Heart left ventricle (tissue), 16 donors: ENCODE measurements at regions of chr2 and their contacts with region 1.

Region 1: DNA sequence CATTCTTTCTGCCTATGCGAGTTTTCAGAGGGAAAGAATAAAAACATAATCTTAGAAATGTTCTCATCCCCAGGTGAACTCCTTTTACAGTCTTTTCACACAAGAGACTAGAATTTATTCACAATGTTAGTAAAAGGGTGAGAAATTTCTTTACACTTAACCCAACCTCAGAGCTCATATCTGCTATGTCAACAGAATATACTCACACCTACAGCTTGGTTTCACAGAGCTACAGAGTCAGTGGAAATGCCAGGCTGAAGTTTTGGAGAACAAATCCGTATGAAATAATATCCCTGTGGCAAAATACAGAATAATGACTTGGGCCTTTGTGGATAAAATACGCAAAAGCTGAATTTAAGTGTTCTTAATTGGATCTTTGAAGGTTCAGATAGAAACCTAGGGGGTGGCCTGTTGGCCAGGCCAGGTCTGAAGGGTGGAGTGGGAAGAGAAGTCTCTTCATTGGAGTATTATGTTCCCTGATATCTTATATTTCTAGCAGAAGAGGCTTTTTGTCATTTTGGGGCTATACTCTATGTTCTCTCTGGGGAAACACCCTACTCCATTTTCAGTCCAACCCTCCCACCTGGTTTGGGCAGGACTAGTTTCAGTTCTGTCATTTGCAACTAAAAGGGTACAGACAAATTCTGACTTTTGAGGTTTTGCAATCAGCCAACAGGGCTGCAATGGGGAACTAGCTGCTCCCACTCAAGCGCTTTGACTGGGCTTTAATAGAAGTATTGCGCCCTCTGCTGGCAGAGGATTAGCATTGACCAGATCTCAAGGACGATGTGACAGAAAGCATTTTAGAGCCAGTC is 25.7 kb downstream of the FBXO48 start:
- DNase-seq: peak in 4 of 5 donors; percentile 81 to 86 (median 82)
- ATAC-seq: peak; percentile 82 to 93 (median 91)
- H3K4me3 ChIP-seq: no peak overlapping the region
- H3K27ac ChIP-seq: peak overlapping the region in 8 of 12 donors; percentile 10 to 69 (median 40)
- H3K4me1 ChIP-seq: peaks cover 0 to 20% (median 13%) of the 10 kb centered on the region in 12 donors
- H3K27me3 ChIP-seq: no peaks in the 10 kb centered on the region
- CTCF ChIP-seq: peak; percentile 85 to 94 (median 89)
- POLR2A ChIP-seq: no peak

Region 2: GRCh38 chr2:68282811-68283418 is 158.5 kb before region 1 on chr2:
- intact Hi-C with region 1: loop called in 2 of 10 experiments (anchors 10 kb)
- DNase-seq: no peak
- ATAC-seq: no peak
- H3K4me3 ChIP-seq: no peak overlapping the region
- H3K27ac ChIP-seq: no peak overlapping the region
- H3K4me1 ChIP-seq: peaks cover 0 to 34% (median 7%) of the 10 kb centered on the region in 12 donors
- H3K27me3 ChIP-seq: no peaks in the 10 kb centered on the region
- CTCF ChIP-seq: peak; percentile 58 to 80 (median 74)
- POLR2A ChIP-seq: no peak

Region 3: DNA sequence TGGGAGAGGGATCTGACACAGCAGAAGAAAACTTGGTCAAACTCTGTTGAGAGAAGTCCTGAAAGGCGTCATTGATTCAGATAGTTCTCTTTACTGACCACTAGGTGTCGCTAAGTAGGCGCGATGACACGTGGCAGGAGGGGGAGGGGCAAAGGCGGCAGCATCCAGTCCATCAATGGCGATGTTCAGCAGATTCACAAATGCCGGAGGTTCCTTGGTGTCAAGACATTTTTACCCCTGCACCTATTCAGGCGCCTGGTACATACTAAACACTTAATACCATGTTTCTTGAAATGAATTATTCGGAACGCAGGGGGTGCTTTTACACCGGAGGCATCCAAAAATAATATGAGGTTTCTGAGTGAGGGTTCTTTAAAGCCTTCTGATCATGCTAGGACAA is 79.3 kb before region 1 on chr2:
- intact Hi-C with region 1: loop called (anchors 1 to 5 kb)
- DNase-seq: peak; percentile 67 to 89 (median 79)
- ATAC-seq: peak in 3 of 4 donors; percentile 73 to 82 (median 75)
- H3K4me3 ChIP-seq: peak overlapping the region in 3 of 12 donors; percentile 24 to 43 (median 27)
- H3K27ac ChIP-seq: peak overlapping the region in 1 of 12 donors; percentile 86
- H3K4me1 ChIP-seq: peaks cover 0 to 24% (median 0%) of the 10 kb centered on the region in 12 donors
- H3K27me3 ChIP-seq: no peaks in the 10 kb centered on the region
- CTCF ChIP-seq: peak; percentile 54 to 83 (median 74)
- POLR2A ChIP-seq: no peak

Region 4: GRCh38 chr2:68565858-68566257 is 124.5 kb after region 1 on chr2:
- intact Hi-C with region 1: no loop called
- DNase-seq: no peak
- ATAC-seq: no peak
- H3K4me3 ChIP-seq: no peak overlapping the region
- H3K27ac ChIP-seq: no peak overlapping the region
- H3K4me1 ChIP-seq: no peaks in the 10 kb centered on the region
- H3K27me3 ChIP-seq: no peaks in the 10 kb centered on the region
- CTCF ChIP-seq: no peak
- POLR2A ChIP-seq: no peak

Region 5: GRCh38 chr2:68673631-68674030 is 232.2 kb after region 1 on chr2:
- intact Hi-C with region 1: no loop called
- DNase-seq: no peak
- ATAC-seq: no peak
- H3K4me3 ChIP-seq: no peak overlapping the region
- H3K27ac ChIP-seq: no peak overlapping the region
- H3K4me1 ChIP-seq: no peaks in the 10 kb centered on the region
- H3K27me3 ChIP-seq: peaks cover 0 to 3% (median 0%) of the 10 kb centered on the region in 9 donors
- CTCF ChIP-seq: no peak
- POLR2A ChIP-seq: no peak